ENCODE measurements at regions of chr19 and their contacts with region 1.

Region 1: GRCh38 chr19:53467485-53468262 is at the start of gene ZNF813:
- DNase-seq: peak; percentile 97
- total RNA-seq, gene ZNF813: 0.75 TPM

Region 2: GRCh38 chr19:53431399-53432087 is 36.1 kb before region 1 on chr19 and contains the start of gene ZNF761:
- intact Hi-C with region 1: loop called (anchors 5 kb)
- DNase-seq: peak; percentile 98
- total RNA-seq, gene ZNF761: 3.5 TPM

Region 3: GRCh38 chr19:53520550-53521372 is 53.1 kb after region 1 on chr19:
- intact Hi-C with region 1: loop called (anchors 5 kb)
- DNase-seq: peak; percentile 96

Region 4: DNA sequence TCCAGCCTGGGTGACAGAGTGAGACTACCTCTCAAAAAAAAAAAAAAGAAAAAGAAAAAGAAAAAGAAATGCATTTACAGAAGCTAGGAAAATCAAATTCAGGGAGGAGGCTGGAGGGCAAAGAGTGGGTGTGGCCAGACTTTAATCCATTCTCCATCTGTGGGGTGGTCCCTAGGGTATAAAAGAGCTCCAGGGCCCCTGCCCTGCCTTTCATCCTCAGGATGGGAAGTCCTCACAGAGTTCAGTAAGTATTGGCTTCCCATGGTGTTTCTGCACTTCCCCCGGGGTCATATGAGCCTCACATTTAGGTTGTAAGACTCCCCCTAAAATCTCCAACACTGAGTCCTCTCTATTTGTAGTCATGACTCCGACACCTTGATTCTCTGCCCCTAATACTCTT is 197.1 kb after region 1 on chr19:
- intact Hi-C with region 1: no loop called
- DNase-seq: no peak

Measured in cardiac septum (tissue), 1 donor.